IMR-90 (cell line): ENCODE measurements at regions of chr7 and their contacts with region 1.

Region 1: DNA sequence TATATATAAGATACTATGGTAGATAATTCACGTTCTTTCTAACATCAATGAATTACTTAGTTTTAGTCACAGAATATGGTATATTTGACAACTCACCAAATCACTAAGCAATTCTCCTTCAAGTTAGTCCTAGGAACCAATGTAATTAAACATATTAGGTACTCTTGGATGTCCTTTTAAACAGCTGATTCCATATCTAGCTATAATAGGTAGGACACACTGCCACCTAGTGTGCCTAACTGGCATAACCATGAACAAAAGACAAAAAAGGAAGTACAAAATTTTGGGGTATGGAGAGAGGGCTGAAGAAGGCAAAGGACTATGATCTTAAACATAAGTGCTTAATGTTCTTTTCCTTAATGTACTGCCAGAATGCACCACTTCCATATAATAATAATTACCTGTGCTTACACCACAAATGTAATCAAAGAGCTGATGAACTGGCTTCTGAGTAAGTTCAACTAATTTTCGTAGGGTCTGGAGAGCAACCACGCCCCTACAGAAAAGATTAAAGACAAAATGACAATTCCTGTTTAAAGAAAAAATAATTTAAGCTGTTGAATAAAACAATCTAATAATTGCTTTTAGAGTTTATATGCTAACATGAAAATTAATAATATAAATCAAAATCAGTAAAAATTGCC is 28.7 kb downstream of the PNPLA8 start:
- DNase-seq: peak; percentile 52
- ATAC-seq: peak; percentile 87
- H3K4me3 ChIP-seq: no peak overlapping the region
- H3K27ac ChIP-seq: no peak overlapping the region
- H3K4me1 ChIP-seq: peaks cover 5% of the 10 kb centered on the region; the same call in 1 of the 2 replicates
- H3K27me3 ChIP-seq: no peaks in the 10 kb centered on the region
- CTCF ChIP-seq: peak; percentile 73
- POLR2A ChIP-seq: no peak
- RAD21 ChIP-seq: peak; percentile 75

Region 2: DNA sequence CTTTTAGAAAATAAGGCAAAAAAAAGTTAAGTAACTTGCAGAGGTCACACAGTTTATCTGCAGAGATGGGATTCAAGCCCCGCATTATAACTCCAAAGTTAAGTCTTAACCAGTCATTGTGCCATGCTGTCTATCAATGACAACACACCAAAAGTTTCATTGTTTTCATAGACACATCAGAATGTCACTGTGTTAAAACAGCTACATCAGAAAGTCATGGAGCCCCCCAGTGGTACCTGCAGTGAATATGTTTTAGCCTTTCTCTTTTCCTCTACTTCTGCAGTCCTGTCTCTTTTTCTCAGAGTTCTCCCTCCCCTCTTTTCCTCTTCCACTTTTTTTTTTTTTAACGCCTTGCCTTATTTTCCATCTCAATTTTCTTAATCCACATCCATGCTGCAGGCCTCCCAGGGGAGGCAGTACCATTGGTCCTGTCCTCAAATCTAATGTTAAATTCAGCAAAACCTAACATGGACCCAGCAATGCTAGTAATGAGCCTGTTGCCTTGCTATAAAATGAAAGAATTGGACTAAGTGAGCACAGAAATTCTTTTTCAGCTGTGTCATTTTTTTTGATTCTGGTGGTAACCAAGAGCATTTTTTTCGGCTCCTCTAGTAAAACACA is 37.2 kb before region 1 on chr7:
- CTCF ChIA-PET with region 1: no interaction called
- POLR2A ChIA-PET with region 1: no interaction called
- dilution Hi-C with region 1: no loop called
- in situ Hi-C with region 1: no loop called
- intact Hi-C with region 1: loop called (anchors 2 kb)
- DNase-seq: no peak
- ATAC-seq: peak; percentile 51; the same call in 1 of the 2 replicates
- H3K4me3 ChIP-seq: no peak overlapping the region
- H3K27ac ChIP-seq: no peak overlapping the region
- H3K4me1 ChIP-seq: no peaks in the 10 kb centered on the region; the same call in 1 of the 2 replicates
- H3K27me3 ChIP-seq: peaks cover 37% of the 10 kb centered on the region
- CTCF ChIP-seq: peak; percentile 45
- POLR2A ChIP-seq: no peak
- RAD21 ChIP-seq: peak; percentile 33; the same call in 1 of the 2 replicates

Region 3: DNA sequence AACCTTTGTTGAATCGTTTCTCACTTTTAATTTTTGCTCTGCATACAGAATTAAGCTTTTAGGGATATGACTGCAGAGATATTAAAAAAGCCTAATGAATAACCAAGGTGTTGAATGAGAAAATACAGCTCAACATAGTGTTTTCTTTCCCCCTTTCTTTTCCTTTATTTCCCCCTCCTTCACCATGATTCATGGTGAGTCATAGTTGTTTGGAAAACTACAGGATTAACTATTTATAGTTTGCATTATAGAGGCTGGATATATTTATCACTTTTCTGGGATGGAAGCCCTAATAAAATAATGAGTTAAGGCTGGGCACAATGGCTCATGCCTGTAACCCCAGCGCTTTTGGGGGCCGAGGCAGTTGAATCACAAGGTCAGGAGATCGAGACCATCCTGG is 187.4 kb after region 1 on chr7:
- CTCF ChIA-PET with region 1: no interaction called
- POLR2A ChIA-PET with region 1: no interaction called
- dilution Hi-C with region 1: no loop called
- in situ Hi-C with region 1: no loop called
- intact Hi-C with region 1: no loop called
- DNase-seq: no peak
- ATAC-seq: no peak
- H3K4me3 ChIP-seq: no peak overlapping the region
- H3K27ac ChIP-seq: no peak overlapping the region
- H3K4me1 ChIP-seq: no peaks in the 10 kb centered on the region
- H3K27me3 ChIP-seq: no peaks in the 10 kb centered on the region
- CTCF ChIP-seq: no peak
- POLR2A ChIP-seq: no peak
- RAD21 ChIP-seq: no peak